CD14-positive monocyte (primary cell): ENCODE measurements at regions of chr6 and their contacts with region 1.

Region 1: GRCh38 chr6:37102279-37103168 is 67.4 kb upstream of the PIM1 start:
- DNase-seq: peak; percentile 85 to 88 (median 86)
- H3K4me3 ChIP-seq: peak overlapping the region; percentile 24 to 68 (median 40)
- H3K4me3 Mint-ChIP-seq: peak overlapping the region; percentile 72 to 86
- H3K27ac ChIP-seq: peak overlapping the region; percentile 90 to 93
- H3K27ac Mint-ChIP-seq: peak overlapping the region; percentile 93 to 99 (median 97)
- H3K4me1 ChIP-seq: peaks cover 40 to 58% of the 10 kb centered on the region in 2 donors
- H3K4me1 Mint-ChIP-seq: peaks cover 55% of the 10 kb centered on the region
- H3K27me3 ChIP-seq: no peaks in the 10 kb centered on the region
- H3K27me3 Mint-ChIP-seq: peaks cover 0 to 2% (median 1%) of the 10 kb centered on the region in 3 donors
- CTCF ChIP-seq: no peak

Region 2: GRCh38 chr6:37051138-37052026 is 51.1 kb before region 1 on chr6:
- intact Hi-C with region 1: loop called in 1 of 2 experiments (anchors 2 kb)
- DNase-seq: peak; percentile 84 to 87 (median 84)
- H3K4me3 ChIP-seq: peak overlapping the region in 1 of 3 experiments; percentile 44
- H3K4me3 Mint-ChIP-seq: peak overlapping the region in 1 of 2 donors; percentile 64
- H3K27ac ChIP-seq: peak overlapping the region; percentile 95 to 97
- H3K27ac Mint-ChIP-seq: peak overlapping the region; percentile 88 to 99 (median 99)
- H3K4me1 ChIP-seq: peaks cover 53 to 67% of the 10 kb centered on the region in 2 donors
- H3K4me1 Mint-ChIP-seq: peaks cover 65% of the 10 kb centered on the region
- H3K27me3 ChIP-seq: no peaks in the 10 kb centered on the region
- H3K27me3 Mint-ChIP-seq: peaks cover 0 to 9% (median 8%) of the 10 kb centered on the region in 3 donors
- CTCF ChIP-seq: peak; percentile 88

Region 3: DNA sequence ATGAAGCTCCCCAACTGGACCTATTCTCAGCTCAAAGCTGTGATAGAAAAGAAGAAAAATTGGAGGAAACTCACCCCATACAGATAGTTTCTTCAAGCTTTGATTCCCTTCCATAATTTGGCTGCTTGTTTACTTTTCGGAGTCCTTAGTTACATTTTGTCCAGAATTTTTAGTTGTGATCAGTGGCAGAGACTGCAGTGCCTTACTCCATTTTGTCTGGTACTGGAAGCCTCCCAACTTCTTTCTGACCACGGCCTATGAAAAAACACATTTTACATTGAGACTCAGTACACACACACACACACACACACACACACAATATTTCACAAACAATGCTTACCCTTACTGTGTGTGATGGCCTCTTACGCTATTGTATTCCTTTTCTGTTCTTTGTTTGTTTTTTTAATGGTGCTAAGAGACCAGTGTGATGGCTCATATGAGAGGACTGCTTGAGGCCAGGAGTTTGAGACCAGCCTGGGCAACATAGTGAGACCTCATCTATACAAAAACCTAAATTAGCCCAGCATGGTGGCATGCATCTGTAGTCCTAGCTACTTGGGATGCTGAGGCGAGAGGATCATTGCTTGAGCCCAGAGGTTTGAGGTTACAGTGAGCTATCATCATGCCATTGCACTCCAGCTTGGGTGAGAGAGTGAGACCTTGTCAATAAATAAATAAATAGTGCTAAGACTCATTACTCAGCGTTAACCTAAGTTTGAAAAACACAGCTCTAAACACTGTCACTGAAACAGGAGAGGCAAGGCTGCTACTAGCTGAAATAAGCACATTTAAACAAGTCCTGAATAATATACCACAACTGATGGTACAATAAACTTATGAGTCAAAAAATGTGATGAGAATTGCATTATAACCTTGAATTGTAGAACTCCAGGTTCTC is 237.5 kb after region 1 on chr6:
- intact Hi-C with region 1: no loop called
- DNase-seq: no peak
- H3K4me3 ChIP-seq: no peak overlapping the region
- H3K4me3 Mint-ChIP-seq: no peak overlapping the region
- H3K27ac ChIP-seq: no peak overlapping the region
- H3K27ac Mint-ChIP-seq: no peak overlapping the region
- H3K4me1 ChIP-seq: no peaks in the 10 kb centered on the region
- H3K4me1 Mint-ChIP-seq: no peaks in the 10 kb centered on the region
- H3K27me3 ChIP-seq: peaks cover 0 to 3% of the 10 kb centered on the region in 2 donors
- H3K27me3 Mint-ChIP-seq: peaks cover 2 to 6% (median 4%) of the 10 kb centered on the region in 3 donors
- CTCF ChIP-seq: no peak